Esophagus muscularis mucosa (tissue), 4 donors: ENCODE measurements at regions of chr3 and their contacts with region 1.

Region 1: GRCh38 chr3:11060500-11061251 is 68.1 kb downstream of the SLC6A1 start:
- DNase-seq: no peak
- H3K4me3 ChIP-seq: peak overlapping the region; percentile 30 to 48 (median 35)
- H3K27ac ChIP-seq: no peak overlapping the region
- H3K4me1 ChIP-seq: peaks cover 3 to 25% (median 13%) of the 10 kb centered on the region in 4 donors
- H3K27me3 ChIP-seq: peaks cover 0 to 33% (median 0%) of the 10 kb centered on the region in 4 donors
- CTCF ChIP-seq: peak; percentile 85 to 94 (median 91)
- EP300 ChIP-seq: no peak
- POLR2A ChIP-seq: no peak

Region 2: GRCh38 chr3:10758304-10759061 is 302.2 kb before region 1 on chr3:
- intact Hi-C with region 1: loop called (anchors 5 kb)
- DNase-seq: no peak
- H3K4me3 ChIP-seq: no peak overlapping the region
- H3K27ac ChIP-seq: no peak overlapping the region
- H3K4me1 ChIP-seq: no peaks in the 10 kb centered on the region
- H3K27me3 ChIP-seq: peaks cover 0 to 94% (median 3%) of the 10 kb centered on the region in 4 donors
- CTCF ChIP-seq: peak; percentile 55 to 69 (median 63)
- EP300 ChIP-seq: no peak
- POLR2A ChIP-seq: no peak

Region 3: GRCh38 chr3:10945683-10946287 is 114.9 kb before region 1 on chr3:
- intact Hi-C with region 1: loop called (anchors 2 kb)
- DNase-seq: no peak
- H3K4me3 ChIP-seq: no peak overlapping the region
- H3K27ac ChIP-seq: no peak overlapping the region
- H3K4me1 ChIP-seq: no peaks in the 10 kb centered on the region
- H3K27me3 ChIP-seq: peaks cover 0 to 36% (median 0%) of the 10 kb centered on the region in 4 donors
- CTCF ChIP-seq: peak; percentile 53 to 87 (median 75)
- EP300 ChIP-seq: no peak
- POLR2A ChIP-seq: no peak

Region 4: GRCh38 chr3:11096266-11097135 is 35.8 kb after region 1 on chr3:
- intact Hi-C with region 1: loop called (anchors 5 kb)
- DNase-seq: no peak
- H3K4me3 ChIP-seq: peak overlapping the region; percentile 41 to 56 (median 47)
- H3K27ac ChIP-seq: peak overlapping the region; percentile 73 to 89 (median 80)
- H3K4me1 ChIP-seq: peaks cover 5 to 37% (median 31%) of the 10 kb centered on the region in 4 donors
- H3K27me3 ChIP-seq: no peaks in the 10 kb centered on the region
- CTCF ChIP-seq: no peak
- EP300 ChIP-seq: peak; percentile 71
- POLR2A ChIP-seq: no peak

Region 5: GRCh38 chr3:11118181-11118682 is 57.6 kb after region 1 on chr3:
- intact Hi-C with region 1: no loop called
- DNase-seq: peak; percentile 42
- H3K4me3 ChIP-seq: no peak overlapping the region
- H3K27ac ChIP-seq: no peak overlapping the region
- H3K4me1 ChIP-seq: peaks cover 0 to 7% (median 0%) of the 10 kb centered on the region in 4 donors
- H3K27me3 ChIP-seq: no peaks in the 10 kb centered on the region
- CTCF ChIP-seq: no peak
- EP300 ChIP-seq: no peak
- POLR2A ChIP-seq: no peak

Region 6: DNA sequence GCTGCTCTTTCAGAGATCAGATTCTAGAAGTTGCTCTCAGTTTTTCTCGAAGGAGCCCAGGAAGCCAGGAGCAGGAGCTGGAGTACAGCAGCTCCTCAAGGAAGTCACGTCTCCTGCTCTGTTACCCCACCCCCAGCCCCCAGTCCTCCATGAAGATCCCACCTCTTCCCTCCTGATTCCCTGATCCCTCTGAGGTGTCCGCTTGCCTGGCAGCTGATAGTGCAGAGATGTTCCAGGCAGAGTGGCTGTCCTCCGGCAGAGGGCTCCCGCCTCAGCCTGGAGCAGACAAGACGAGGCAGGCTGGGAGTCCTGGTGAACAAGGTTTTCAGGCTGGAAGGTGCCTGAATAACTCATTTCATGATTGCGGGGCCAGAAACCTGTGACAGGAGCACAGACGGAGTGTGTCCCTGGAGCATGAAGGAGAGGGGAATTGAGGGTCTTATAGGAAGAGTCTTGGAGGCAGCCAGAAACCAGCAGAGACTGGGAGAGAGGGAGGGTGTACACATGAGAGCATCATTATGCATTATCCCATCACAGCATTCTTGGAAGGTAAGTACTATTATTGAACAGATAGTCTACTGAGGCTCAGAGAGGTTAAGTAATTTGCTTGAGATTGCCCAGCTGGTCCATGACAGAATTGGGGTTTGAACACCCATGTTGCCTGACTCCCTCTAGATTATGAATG is 94.8 kb after region 1 on chr3:
- intact Hi-C with region 1: loop called (anchors 5 kb)
- DNase-seq: no peak
- H3K4me3 ChIP-seq: peak overlapping the region; percentile 57 to 79 (median 64)
- H3K27ac ChIP-seq: peak overlapping the region; percentile 61 to 72 (median 70)
- H3K4me1 ChIP-seq: peaks cover 7 to 49% (median 44%) of the 10 kb centered on the region in 4 donors
- H3K27me3 ChIP-seq: peaks cover 0 to 21% (median 0%) of the 10 kb centered on the region in 4 donors
- CTCF ChIP-seq: peak; percentile 56 to 78 (median 69)
- EP300 ChIP-seq: no peak
- POLR2A ChIP-seq: no peak

Region 7: DNA sequence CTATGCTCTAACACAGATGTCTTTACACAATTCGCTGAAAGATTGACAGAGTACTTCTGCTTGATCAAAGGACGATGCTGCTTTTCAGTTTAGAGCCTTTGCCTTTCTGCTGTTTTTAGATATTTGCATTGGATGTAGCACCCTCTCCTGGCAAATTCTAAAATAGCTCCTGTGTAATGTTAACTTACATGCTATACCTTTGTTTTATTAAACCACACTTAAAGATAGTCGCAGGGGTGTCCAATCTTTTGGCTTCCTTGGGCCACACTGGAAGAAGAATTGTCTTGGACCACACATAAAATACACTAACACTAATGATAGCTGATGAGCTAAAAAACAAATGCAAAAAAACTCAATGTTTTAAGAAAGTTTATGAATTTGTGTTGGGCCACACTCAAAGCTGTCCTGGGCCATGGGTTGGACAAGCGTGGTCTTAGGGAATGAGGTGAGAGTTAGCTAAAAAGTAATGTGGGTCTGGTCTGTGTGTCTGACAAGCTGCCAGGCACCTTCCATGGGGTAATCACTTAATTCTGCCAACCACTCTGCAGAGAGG is 274.5 kb after region 1 on chr3:
- intact Hi-C with region 1: loop called (anchors 2 kb)
- DNase-seq: no peak
- H3K4me3 ChIP-seq: no peak overlapping the region
- H3K27ac ChIP-seq: no peak overlapping the region
- H3K4me1 ChIP-seq: no peaks in the 10 kb centered on the region
- H3K27me3 ChIP-seq: no peaks in the 10 kb centered on the region
- CTCF ChIP-seq: peak; percentile 51 to 71 (median 61)
- EP300 ChIP-seq: no peak
- POLR2A ChIP-seq: no peak